ENCODE measurements at regions of chr11 and their contacts with region 1.

Region 1: DNA sequence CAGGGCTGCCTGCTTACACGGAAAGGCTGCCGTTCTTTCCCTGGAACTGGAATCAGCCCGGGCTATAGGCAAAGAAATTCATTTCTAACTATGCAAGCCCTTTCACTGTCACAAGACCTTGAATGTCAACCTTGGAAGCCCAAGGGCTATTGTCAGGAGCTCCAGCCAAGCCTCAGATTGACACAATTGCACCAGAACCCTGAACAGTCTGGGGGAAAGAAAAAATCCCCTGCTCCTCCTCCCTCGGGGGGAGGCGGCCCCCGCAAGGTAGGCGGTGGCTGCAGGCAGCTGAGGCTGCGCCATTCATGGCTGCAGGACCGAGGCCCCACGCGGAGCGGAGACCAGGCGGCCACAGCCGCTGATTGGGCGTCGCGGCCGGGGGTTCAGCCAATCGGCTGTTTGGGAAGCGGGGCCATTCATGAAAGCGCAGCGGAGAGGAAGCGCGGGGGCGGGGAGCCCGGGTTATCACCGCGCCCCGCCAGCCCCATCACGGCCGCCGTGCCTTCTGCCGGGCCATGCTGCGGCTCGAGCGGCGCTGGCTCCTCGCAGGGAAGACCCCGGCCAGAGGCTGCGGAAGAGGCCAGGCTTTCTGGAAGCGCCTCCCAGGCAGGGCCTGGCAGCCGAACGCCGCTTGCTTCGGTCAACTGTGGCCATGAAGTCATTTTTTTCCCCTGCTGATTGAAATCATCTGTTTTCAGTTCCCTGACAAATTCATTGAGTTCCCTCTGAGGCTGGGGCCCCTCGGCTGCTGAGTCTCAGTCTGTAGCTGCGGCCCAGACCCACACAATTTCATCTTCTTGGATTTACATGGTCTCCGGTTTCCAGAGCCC is 38.1 kb upstream of the LINC01488 start:
- DNase-seq: peak; percentile 91 to 92
- ATAC-seq: peak; percentile 81 to 89 (median 86)
- H3K4me3 ChIP-seq: peak overlapping the region; percentile 48
- H3K27ac ChIP-seq: peak overlapping the region; percentile 75
- H3K4me1 ChIP-seq: peaks cover 24% of the 10 kb centered on the region
- H3K27me3 ChIP-seq: peaks cover 0 to 3% (median 2%) of the 10 kb centered on the region in 3 donors
- CTCF ChIP-seq: no peak

Region 2: DNA sequence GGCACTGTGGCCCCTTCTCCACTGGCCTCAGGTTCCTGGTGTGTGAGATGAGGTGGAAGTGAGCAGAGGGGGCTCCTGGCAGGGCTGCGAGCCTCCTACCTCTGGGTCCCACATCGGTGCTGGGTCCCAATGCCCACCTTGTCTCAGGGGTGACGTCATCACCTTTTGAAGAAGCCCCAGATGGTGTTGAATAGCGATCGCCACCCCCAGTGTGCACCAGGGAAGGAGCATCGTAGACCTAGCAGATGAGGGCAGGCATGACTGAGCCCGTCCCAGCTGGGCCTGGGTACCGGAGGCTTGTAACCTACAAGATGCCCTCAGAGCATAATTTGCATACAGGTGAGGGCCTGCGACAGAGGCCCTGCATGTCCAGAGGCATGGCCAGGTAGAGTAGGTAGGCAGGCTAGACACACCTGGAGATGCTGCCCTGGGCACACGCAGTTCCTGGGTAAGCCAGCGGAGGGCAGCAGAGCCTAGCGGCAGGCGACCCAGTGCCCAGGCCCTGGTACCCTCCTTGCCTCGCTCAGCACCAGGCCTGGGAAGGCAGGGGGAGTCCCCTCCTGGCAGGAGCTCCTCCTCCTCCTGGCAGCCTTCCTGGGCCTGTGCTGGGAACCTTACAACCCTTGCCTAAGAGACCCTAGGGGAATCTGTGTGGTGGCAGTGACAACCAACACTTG is 342.1 kb before region 1 on chr11:
- intact Hi-C with region 1: loop called in 1 of 2 experiments (anchors 10 kb)
- DNase-seq: peak; percentile 59 to 79
- ATAC-seq: peak; percentile 79 to 89 (median 87)
- H3K4me3 ChIP-seq: no peak overlapping the region
- H3K27ac ChIP-seq: no peak overlapping the region
- H3K4me1 ChIP-seq: no peaks in the 10 kb centered on the region
- H3K27me3 ChIP-seq: peaks cover 0 to 34% (median 2%) of the 10 kb centered on the region in 3 donors
- CTCF ChIP-seq: peak; percentile 98

Region 3: DNA sequence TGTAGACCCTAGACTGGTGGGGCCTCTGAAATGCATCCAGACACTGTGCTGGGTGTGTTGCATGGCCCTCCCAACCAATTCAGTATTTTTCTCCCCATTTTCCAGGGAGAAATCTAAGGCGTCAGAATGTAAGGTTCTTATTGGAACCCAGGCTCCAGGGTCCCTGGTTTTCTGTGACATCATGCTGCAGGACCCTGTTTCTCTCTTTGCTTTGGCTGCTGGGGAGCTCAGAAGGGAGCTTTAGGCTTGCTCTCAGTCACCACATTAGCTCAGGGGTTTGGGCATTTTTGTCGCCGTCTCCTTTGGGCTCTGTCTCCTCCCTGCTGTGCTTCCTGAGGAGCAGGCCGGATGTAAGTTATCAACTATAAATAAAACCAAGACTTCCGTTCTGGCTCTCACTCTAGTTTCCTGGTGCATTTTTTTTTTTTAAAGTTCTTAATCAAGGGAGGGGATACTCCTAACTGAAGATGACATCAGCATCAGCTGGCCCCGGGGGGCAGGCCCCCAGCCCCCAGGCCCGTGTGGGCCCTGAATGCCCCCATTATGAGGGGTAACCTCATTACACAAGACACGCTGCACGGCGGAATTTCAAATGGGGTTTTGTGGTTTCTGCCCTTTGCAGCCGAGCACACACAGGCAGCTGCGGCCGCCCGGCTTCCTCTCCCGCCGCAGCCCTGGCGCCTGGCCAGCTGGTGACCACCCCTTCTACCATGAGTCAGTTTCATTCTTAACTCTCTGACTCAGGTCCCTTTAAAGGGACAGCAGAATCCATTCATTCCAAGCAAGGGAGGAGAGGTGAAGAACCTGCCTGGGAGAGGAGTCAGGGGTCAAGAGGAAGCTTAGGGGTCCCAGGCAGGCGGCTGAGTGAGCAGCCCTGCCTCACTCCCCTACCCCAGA is 146.2 kb before region 1 on chr11:
- intact Hi-C with region 1: loop called in 1 of 2 experiments (anchors 5 kb)
- DNase-seq: peak; percentile 94 to 95
- ATAC-seq: peak; percentile 79 to 88 (median 82)
- H3K4me3 ChIP-seq: peak overlapping the region; percentile 45
- H3K27ac ChIP-seq: peak overlapping the region; percentile 72
- H3K4me1 ChIP-seq: peaks cover 20% of the 10 kb centered on the region
- H3K27me3 ChIP-seq: peaks cover 0 to 11% (median 0%) of the 10 kb centered on the region in 3 donors
- CTCF ChIP-seq: no peak

Region 4: GRCh38 chr11:69493931-69494821 is 50.8 kb after region 1 on chr11:
- intact Hi-C with region 1: loop called in 1 of 2 experiments (anchors 5 kb)
- DNase-seq: peak; percentile 10 to 39
- ATAC-seq: no peak
- H3K4me3 ChIP-seq: no peak overlapping the region
- H3K27ac ChIP-seq: no peak overlapping the region
- H3K4me1 ChIP-seq: peaks cover 21% of the 10 kb centered on the region
- H3K27me3 ChIP-seq: no peaks in the 10 kb centered on the region
- CTCF ChIP-seq: no peak

Region 5: GRCh38 chr11:69540118-69540502 is 96.8 kb after region 1 on chr11:
- intact Hi-C with region 1: loop called in 1 of 2 experiments (anchors 5 kb)
- DNase-seq: peak; percentile 51 to 76
- ATAC-seq: peak; percentile 89 to 95 (median 93)
- H3K4me3 ChIP-seq: peak overlapping the region; percentile 33
- H3K27ac ChIP-seq: peak overlapping the region; percentile 15
- H3K4me1 ChIP-seq: peaks cover 12% of the 10 kb centered on the region
- H3K27me3 ChIP-seq: no peaks in the 10 kb centered on the region
- CTCF ChIP-seq: peak; percentile 15

Region 6: GRCh38 chr11:69642913-69643632 is 199.7 kb after region 1 on chr11:
- intact Hi-C with region 1: loop called in 1 of 2 experiments (anchors 5 kb)
- DNase-seq: peak; percentile 78 to 84
- ATAC-seq: peak; percentile 76 to 86 (median 84)
- H3K4me3 ChIP-seq: peak overlapping the region; percentile 75
- H3K27ac ChIP-seq: no peak overlapping the region
- H3K4me1 ChIP-seq: peaks cover 20% of the 10 kb centered on the region
- H3K27me3 ChIP-seq: peaks cover 0 to 79% (median 19%) of the 10 kb centered on the region in 3 donors
- CTCF ChIP-seq: peak; percentile 92

Region 7: DNA sequence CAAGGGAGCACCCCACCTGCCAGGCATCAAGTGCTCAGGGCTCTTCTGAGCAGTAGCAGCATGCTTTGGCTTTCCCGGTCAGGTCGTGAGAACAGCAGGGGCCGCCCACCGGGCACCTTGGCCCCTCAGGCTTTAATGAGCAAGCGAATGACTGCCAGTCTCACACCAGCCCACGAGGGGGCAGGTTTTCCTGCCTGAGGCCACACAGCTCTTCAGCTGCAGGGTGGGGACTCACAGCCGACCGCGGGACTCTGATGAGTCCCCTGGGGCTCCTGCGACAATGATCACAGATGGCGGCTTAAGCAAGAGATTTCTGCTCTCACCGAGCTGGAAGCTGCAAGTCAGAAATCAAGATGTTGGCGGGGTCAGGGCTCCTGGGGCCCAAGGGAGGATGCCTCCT is 274.8 kb after region 1 on chr11:
- intact Hi-C with region 1: no loop called
- DNase-seq: no peak
- ATAC-seq: no peak
- H3K4me3 ChIP-seq: no peak overlapping the region
- H3K27ac ChIP-seq: no peak overlapping the region
- H3K4me1 ChIP-seq: no peaks in the 10 kb centered on the region
- H3K27me3 ChIP-seq: peaks cover 0 to 79% (median 18%) of the 10 kb centered on the region in 3 donors
- CTCF ChIP-seq: peak; percentile 35

Measured in psoas muscle (tissue), 8 donors.